Caco-2 (cell line): ENCODE measurements at regions of chr12 and their contacts with region 1.

Region 1: DNA sequence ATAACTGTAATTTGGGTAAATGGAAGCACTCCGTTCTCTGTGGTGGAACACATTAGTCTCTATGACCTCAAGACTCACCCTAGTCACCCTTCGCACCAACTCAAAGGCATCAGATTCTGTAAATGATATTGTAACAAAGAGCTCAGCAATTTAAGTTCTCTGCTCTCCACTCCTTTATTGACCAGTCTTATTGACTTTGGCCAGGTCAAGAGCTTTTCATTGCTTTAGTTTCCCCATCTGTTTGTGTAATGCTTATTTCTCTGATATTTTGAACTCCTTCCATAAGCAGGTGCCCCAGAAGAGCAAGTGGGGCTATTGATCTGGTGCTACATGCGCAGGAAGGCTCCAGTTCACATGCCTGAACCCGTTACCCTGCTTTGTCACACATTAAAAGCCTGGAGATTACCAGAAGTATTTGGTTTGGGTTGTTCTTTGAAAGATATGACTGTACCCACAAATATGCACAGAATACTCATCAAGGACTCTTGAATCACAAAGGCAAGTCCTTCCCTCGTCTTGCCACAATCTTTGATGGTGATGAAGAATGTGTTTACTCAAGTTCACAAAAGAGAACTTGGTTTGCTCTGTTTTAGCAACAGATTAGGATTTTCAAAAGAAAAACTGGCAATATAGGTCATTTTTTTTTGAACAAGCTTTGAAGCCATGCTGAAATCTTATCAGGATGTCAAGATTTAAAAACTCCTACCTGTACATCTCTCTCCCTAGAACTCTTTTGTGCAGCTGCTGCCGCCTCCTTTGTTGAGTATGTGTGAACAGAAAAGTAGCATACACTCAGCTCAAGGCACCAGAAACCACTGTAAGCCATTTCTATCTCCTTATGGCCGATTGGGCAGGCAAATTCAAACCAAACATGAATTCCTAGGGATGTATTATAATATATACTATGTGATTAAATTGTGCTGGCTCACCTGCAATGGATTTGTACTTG is 193.9 kb downstream of the BCAT1 start:
- DNase-seq: peak; percentile 94 to 95
- H3K4me3 ChIP-seq: no peak overlapping the region
- H3K4me3 Mint-ChIP-seq: peak overlapping the region; percentile 70
- H3K27ac Mint-ChIP-seq: peak overlapping the region; percentile 97
- H3K4me1 ChIP-seq: peaks cover 78% of the 10 kb centered on the region
- H3K4me1 Mint-ChIP-seq: peaks cover 52% of the 10 kb centered on the region
- H3K27me3 ChIP-seq: no peaks in the 10 kb centered on the region
- H3K27me3 Mint-ChIP-seq: no peaks in the 10 kb centered on the region
- CTCF ChIP-seq: no peak

Region 2: DNA sequence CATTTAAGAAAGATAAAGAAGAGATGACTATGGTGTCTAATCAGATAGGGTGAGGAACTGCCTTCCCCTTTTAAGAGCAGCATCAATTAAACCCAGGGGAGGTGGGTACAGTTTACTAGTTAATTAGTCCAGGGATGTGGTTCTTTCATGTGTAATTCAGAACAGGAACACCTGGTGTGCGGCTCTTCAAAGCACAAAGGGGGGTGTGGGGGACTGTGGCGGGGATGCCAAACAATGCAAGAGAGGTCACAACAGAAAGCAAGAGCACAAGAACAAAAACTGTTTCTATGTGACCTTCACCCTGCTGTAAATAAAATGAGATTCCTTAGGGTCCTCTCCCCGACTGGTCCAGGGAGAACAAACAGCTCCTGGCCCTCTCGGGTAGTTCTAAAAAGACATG is 621.6 kb before region 1 on chr12:
- CTCF ChIA-PET with region 1: no interaction called
- POLR2A ChIA-PET with region 1: no interaction called
- intact Hi-C with region 1: loop called (anchors 1 kb)
- DNase-seq: peak; percentile 90 to 96
- H3K4me3 ChIP-seq: no peak overlapping the region
- H3K4me3 Mint-ChIP-seq: peak overlapping the region; percentile 34
- H3K27ac Mint-ChIP-seq: peak overlapping the region; percentile 62
- H3K4me1 ChIP-seq: peaks cover 62% of the 10 kb centered on the region
- H3K4me1 Mint-ChIP-seq: peaks cover 51% of the 10 kb centered on the region
- H3K27me3 ChIP-seq: no peaks in the 10 kb centered on the region
- H3K27me3 Mint-ChIP-seq: no peaks in the 10 kb centered on the region
- CTCF ChIP-seq: no peak

Region 3: DNA sequence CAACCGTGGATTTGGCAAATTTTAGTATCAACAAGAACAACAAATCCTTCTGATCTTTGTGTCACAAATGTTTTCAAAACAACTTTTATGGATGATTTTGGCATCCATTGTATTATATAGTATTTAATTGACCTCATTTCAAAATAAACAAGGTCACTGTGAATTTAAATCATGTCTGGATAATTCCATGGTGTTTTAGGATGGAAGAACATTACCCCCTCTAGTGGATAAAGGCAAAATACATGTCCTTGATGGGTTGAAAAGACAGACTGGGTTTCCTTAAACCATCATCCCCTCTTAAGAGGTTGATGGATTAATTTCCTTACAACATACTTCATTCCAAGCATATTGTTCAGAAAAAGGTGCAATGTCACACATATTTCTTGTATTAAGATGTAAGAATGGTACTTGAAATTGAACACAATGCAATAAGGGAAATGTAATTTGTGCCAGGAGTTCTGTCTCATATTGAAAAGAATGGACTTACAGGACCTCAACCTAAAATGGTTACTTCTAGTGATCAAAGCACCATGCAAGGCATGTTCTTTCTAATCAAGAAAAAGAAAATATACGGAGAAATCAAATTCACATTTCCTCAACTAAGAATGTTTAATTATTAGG is 158.1 kb before region 1 on chr12:
- CTCF ChIA-PET with region 1: no interaction called
- POLR2A ChIA-PET with region 1: no interaction called
- intact Hi-C with region 1: loop called (anchors 5 kb)
- DNase-seq: peak in 1 of 2 experiments; percentile 47
- H3K4me3 ChIP-seq: no peak overlapping the region
- H3K4me3 Mint-ChIP-seq: no peak overlapping the region
- H3K27ac Mint-ChIP-seq: no peak overlapping the region
- H3K4me1 ChIP-seq: no peaks in the 10 kb centered on the region; the same call in 1 of the 2 replicates
- H3K4me1 Mint-ChIP-seq: peaks cover 18% of the 10 kb centered on the region
- H3K27me3 ChIP-seq: no peaks in the 10 kb centered on the region
- H3K27me3 Mint-ChIP-seq: no peaks in the 10 kb centered on the region
- CTCF ChIP-seq: peak; percentile 76 to 79

Region 4: GRCh38 chr12:24679126-24679525 is 75.8 kb before region 1 on chr12:
- CTCF ChIA-PET with region 1: no interaction called
- POLR2A ChIA-PET with region 1: interaction called, 3 read pairs
- intact Hi-C with region 1: loop called (anchors 2 kb)
- DNase-seq: peak in 1 of 2 experiments; percentile 71
- H3K4me3 ChIP-seq: no peak overlapping the region
- H3K4me3 Mint-ChIP-seq: no peak overlapping the region
- H3K27ac Mint-ChIP-seq: peak overlapping the region; percentile 76
- H3K4me1 ChIP-seq: peaks cover 25% of the 10 kb centered on the region
- H3K4me1 Mint-ChIP-seq: peaks cover 33% of the 10 kb centered on the region
- H3K27me3 ChIP-seq: no peaks in the 10 kb centered on the region
- H3K27me3 Mint-ChIP-seq: no peaks in the 10 kb centered on the region
- CTCF ChIP-seq: no peak

Region 5: GRCh38 chr12:24705741-24706358 is 49.1 kb before region 1 on chr12:
- CTCF ChIA-PET with region 1: no interaction called
- POLR2A ChIA-PET with region 1: no interaction called
- intact Hi-C with region 1: loop called (anchors 2 kb)
- DNase-seq: no peak
- H3K4me3 ChIP-seq: no peak overlapping the region
- H3K4me3 Mint-ChIP-seq: peak overlapping the region; percentile 58
- H3K27ac Mint-ChIP-seq: peak overlapping the region; percentile 81
- H3K4me1 ChIP-seq: peaks cover 34% of the 10 kb centered on the region
- H3K4me1 Mint-ChIP-seq: peaks cover 11% of the 10 kb centered on the region
- H3K27me3 ChIP-seq: no peaks in the 10 kb centered on the region
- H3K27me3 Mint-ChIP-seq: no peaks in the 10 kb centered on the region
- CTCF ChIP-seq: no peak